ENCODE measurements at regions of chr12 and their contacts with region 1.

Region 1: DNA sequence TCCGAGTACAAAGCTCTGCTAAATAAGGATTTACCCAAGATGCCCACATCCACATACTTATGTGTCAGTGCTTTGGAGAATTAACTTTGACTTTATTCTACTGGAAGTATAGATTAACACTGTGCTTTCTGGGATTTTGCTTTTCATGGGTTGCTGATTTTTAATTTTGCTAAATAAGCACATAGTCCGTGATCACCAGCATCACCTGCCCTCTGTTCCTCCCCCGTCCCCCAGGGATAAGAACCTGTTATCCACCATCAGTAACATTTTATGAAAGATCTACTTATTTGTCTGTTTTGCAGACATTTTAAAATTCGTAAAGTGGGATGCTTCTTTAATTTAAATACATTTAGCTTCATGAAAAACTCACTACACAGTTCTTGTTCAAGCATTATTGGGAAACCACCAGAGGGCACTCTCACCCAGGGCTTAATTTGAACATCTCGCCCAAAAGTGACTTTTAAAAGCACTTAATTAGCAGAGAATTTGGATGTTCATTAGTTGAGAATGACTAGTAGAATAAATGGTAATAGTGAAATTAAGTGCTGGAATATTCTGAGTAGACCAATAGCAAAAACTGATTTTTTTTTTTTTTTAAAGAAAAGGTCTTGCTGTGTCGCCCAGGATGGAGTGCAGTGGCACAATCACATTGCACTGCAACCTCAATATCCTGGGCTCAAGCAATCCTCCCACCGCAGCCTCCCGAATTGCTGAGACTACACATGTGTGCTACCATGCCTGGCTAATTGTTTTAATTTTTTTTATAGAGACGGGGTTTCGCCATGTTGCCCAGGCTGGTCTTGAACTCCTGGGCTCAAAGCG is 35.7 kb downstream of the MRPL42 start:
- DNase-seq: no peak
- H3K4me3 ChIP-seq: no peak overlapping the region
- H3K27ac ChIP-seq: no peak overlapping the region
- H3K27me3 ChIP-seq: no peaks in the 10 kb centered on the region
- CTCF ChIP-seq: peak; percentile 85

Region 2: DNA sequence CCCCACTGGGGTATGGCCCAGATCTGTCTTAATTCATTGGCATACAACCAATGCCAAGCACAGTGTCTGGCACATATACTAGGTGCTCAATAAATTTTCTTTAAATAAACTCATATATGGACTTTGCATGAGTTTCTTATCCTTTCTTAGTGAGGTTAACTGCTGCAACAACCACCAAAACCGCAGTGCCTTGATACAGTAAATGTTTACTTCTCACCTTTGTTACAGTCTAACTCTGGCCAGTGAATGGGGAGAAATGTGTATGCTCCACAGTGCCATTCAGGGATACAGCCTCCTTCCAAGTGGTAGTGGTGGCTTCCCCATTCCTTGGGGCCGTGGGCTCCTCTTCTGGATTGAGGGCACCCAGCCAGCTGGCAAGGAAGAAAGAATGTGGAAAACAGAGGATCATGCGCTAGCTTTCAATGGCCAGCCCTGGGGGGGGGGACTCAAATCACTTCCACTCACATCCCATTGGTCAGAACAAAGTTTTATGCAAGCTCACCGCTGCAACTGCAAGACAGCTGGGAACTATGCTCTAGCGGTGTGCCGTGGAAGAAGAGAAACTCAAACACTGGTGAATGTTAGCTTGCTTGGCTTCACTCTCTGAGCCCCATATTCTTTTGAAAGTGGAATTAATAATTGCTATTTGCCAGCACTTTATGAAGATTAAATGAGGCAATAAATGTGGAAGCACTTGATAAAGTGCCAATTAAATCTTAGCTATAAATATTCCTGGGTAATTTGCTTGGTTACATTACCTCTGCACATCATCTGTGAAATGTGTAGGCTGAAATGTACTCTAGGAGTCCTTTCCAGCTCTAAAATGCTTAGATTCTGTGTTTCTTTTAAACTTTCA is 18.4 kb after region 1 on chr12:
- CTCF ChIA-PET with region 1: interaction called, 81 read pairs
- POLR2A ChIA-PET with region 1: no interaction called
- DNase-seq: no peak
- H3K4me3 ChIP-seq: no peak overlapping the region
- H3K27ac ChIP-seq: no peak overlapping the region
- H3K27me3 ChIP-seq: no peaks in the 10 kb centered on the region
- CTCF ChIP-seq: no peak

Region 3: DNA sequence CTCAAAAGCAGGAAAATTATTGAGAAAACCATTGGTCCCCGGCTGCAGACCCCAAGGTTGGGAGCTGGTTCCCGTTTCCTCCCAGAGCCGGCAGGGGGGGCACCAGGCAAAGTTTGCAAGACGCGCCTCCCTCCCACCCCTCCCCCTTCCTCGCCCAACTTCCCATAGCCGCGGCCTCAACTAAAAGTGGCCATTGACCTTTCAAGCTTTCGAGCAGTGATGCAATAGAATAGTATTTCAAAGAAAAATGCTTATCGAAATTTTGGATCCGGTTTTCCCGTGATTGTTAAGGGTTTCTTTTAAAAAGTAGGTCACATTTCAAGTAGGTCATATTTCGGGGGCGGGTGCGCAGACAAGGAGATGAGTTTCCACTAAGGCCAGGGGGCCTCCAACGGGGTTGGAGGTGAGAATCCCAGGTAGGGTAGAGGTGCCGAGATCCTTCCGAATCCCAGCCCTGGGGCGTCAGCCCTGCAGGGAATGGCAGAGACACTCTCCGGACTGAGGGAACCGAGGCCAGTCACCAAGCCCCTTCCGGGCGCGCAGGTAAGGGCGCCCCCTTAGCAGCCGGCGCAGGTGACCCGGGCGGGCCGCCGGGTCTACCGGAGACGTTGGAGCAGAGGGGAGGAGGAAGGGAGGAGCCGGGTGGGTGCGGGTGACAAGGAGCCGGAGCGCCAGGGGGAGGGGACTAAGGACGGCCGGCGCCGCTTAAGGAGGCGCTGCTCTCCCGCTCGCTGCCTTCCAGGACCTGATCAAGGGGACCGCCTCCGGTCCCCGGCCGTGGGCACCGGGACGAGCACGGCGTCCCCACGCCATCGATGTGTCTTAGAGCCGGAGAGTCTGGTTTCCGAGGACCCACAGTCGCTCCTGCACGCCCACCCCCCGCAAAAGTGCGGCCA is 66.9 kb after region 1 on chr12:
- CTCF ChIA-PET with region 1: interaction called, 45 read pairs
- POLR2A ChIA-PET with region 1: no interaction called
- DNase-seq: peak; percentile 65
- H3K4me3 ChIP-seq: peak overlapping the region; percentile 77
- H3K27ac ChIP-seq: peak overlapping the region; percentile 61
- H3K27me3 ChIP-seq: no peaks in the 10 kb centered on the region
- CTCF ChIP-seq: peak; percentile 90

Region 4: DNA sequence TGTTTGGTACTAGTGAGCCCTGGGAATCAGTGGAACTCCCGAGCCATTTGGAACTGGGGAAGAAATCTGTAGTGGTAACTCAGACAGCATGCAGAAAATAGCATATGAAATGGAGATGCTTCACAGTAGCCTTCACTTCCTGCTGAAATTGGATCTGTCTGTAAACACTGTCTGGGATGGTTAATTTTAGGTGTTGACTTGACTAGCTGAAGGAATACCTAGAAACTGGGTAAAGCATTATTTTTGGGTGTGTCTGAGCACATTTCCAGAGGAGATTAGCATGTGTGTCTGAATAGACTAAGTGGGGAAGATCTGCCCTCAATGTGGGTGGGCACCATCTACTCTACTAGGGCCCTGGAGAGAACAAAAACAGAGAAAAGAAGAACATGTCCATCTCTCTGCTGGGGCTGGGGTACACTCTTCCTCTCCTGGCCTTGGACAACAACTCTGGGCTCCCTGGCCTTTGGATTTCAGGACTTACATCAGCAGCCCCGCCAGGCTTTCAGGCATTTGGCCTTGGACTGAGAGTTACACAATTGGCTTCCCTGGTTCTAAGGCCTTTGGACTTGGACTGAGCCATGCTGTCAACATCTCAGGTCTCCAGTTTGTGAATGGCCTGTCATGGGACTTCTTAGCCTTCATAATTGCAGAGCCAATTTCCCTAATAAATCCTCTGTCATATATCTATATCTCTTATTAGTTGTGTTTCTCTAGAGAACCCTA is 160.2 kb after region 1 on chr12:
- CTCF ChIA-PET with region 1: no interaction called
- POLR2A ChIA-PET with region 1: no interaction called
- DNase-seq: no peak
- H3K4me3 ChIP-seq: no peak overlapping the region
- H3K27ac ChIP-seq: no peak overlapping the region
- H3K27me3 ChIP-seq: no peaks in the 10 kb centered on the region
- CTCF ChIP-seq: no peak

Region 5: GRCh38 chr12:93766796-93767523 is 263.9 kb after region 1 on chr12:
- CTCF ChIA-PET with region 1: interaction called, 20 read pairs
- POLR2A ChIA-PET with region 1: no interaction called
- DNase-seq: no peak
- H3K4me3 ChIP-seq: no peak overlapping the region
- H3K27ac ChIP-seq: no peak overlapping the region
- H3K27me3 ChIP-seq: no peaks in the 10 kb centered on the region
- CTCF ChIP-seq: peak; percentile 72

Measured in AG04450 (cell line).